Right ventricle myocardium superior (tissue), 1 donor: ENCODE measurements at regions of chr17 and their contacts with region 1.

Region 1: GRCh38 chr17:68172461-68172954 is 75.3 kb upstream of the AMZ2 start:
- DNase-seq: peak; percentile 80
- ATAC-seq: peak; percentile 89

Region 2: GRCh38 chr17:68247445-68248198 is 75.1 kb after region 1 on chr17 and contains the start of gene AMZ2:
- intact Hi-C with region 1: no loop called
- DNase-seq: peak; percentile 97
- ATAC-seq: peak; percentile 98
- total RNA-seq, gene AMZ2: 89.5 TPM

Region 3: DNA sequence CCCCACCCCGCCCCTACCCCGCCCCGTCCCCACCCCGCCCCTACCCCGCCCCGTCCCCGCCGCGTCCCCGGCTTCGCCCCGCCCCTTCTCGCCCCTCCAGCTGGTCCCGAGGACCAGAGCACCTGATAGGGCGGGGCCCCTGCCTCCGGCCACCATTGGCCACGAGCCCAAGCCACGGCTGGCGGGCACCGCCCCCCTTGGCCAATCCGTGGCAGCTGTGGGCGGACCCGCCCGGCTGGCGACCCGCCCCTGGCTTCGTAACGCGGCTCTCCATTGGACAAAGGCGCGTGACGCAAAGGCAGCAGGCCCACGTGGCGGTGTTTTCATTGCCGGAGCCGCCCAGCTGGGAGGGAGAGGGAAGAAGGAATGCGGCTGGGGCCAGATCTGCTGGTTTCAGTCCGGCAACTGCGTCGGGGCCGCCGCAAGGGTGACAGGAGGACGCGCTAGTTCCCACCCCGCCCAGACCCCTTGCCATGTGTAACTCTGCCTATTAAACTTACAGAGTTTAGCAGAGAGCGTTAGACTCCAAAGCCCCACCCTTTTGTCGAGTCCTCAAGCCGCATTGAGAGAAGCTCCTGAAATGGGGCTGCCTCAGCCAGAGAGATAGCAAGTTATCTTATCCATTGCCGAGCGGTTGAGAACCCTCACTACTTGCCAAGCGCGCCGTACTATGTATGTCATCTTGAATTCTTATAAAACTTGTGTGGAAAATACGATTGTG is 285.2 kb after region 1 on chr17:
- intact Hi-C with region 1: loop called (anchors 10 kb)
- DNase-seq: peak; percentile 100
- ATAC-seq: peak; percentile 87

Region 4: DNA sequence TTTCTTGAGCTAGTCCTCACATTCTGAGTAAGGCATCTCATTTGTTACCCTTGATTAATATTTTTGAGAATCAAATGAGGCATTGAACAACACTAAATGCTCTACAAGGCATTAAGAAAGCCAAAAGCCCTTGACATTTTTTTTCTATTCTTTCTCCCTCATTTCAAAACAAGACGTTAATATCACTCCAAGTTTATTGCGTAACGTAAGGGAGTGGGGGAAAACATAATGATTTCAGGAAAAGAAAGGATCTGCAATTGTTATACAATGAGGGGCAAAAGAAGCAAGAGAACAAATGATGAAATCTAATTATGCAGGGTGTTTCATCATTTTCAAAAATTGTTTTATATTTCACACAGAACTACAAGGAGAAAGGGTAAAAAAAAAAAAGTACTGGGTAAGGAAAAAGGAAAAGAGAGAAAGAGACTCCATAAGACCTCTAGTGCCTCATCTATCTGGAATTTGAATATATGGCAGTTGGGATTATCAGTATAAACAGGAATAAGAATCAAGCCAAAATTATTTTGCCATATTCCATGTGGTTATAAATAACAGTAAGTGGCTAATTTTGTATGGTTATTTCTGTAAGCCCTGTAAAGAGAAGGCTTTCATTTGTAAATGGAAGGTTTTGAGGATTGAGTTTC is 619.7 kb after region 1 on chr17:
- intact Hi-C with region 1: no loop called
- DNase-seq: no peak
- ATAC-seq: peak; percentile 50